ENCODE measurements at regions of chr4 and their contacts with region 1.

Region 1: GRCh38 chr4:11720292-11720691 is 291.6 kb upstream of the HS3ST1 start:
- DNase-seq: peak in 5 of 7 donors; percentile 29 to 55 (median 33)
- H3K4me3 ChIP-seq: no peak overlapping the region
- H3K27ac ChIP-seq: no peak overlapping the region
- H3K4me1 ChIP-seq: no peaks in the 10 kb centered on the region
- H3K27me3 ChIP-seq: no peaks in the 10 kb centered on the region
- CTCF ChIP-seq: peak; percentile 67 to 86 (median 82)
- POLR2A ChIP-seq: no peak

Region 2: GRCh38 chr4:10565166-10565780 is 1155.0 kb before region 1 on chr4:
- intact Hi-C with region 1: loop called in 1 of 2 experiments (anchors 10 kb)
- DNase-seq: peak in 6 of 7 donors; percentile 17 to 49 (median 36)
- H3K4me3 ChIP-seq: no peak overlapping the region
- H3K27ac ChIP-seq: peak overlapping the region in 1 of 5 donors; percentile 26
- H3K4me1 ChIP-seq: no peaks in the 10 kb centered on the region
- H3K27me3 ChIP-seq: no peaks in the 10 kb centered on the region
- CTCF ChIP-seq: no peak
- POLR2A ChIP-seq: no peak

Region 3: GRCh38 chr4:11393551-11393950 is 326.7 kb before region 1 on chr4:
- intact Hi-C with region 1: no loop called
- DNase-seq: no peak
- H3K4me3 ChIP-seq: no peak overlapping the region
- H3K27ac ChIP-seq: no peak overlapping the region
- H3K4me1 ChIP-seq: peaks cover 11 to 15% of the 10 kb centered on the region in 2 donors
- H3K27me3 ChIP-seq: no peaks in the 10 kb centered on the region
- CTCF ChIP-seq: no peak
- POLR2A ChIP-seq: no peak

Region 4: DNA sequence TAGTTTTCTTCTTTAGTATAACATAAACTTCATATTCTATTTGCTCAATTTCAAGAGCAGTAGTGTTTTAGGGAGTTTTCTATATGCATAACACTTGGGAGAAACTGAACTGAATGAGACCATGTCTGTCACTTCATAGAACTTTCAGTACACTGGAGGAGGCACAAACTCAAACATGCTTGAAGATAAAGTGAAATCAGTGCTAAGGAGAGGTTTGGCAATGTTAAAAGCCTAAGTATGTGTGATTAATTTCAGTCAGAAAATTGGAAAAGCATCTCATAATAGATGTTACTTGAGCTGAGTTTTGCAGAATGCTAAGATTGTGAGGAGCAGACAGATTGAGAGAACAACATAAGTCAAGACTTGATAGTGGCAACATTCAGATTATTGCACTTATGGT is 119.6 kb after region 1 on chr4:
- intact Hi-C with region 1: no loop called
- DNase-seq: no peak
- H3K4me3 ChIP-seq: no peak overlapping the region
- H3K27ac ChIP-seq: no peak overlapping the region
- H3K4me1 ChIP-seq: no peaks in the 10 kb centered on the region
- H3K27me3 ChIP-seq: no peaks in the 10 kb centered on the region
- CTCF ChIP-seq: no peak
- POLR2A ChIP-seq: no peak

Region 5: GRCh38 chr4:12041828-12042227 is 321.5 kb after region 1 on chr4:
- intact Hi-C with region 1: no loop called
- DNase-seq: no peak
- H3K4me3 ChIP-seq: no peak overlapping the region
- H3K27ac ChIP-seq: no peak overlapping the region
- H3K4me1 ChIP-seq: no peaks in the 10 kb centered on the region
- H3K27me3 ChIP-seq: no peaks in the 10 kb centered on the region
- CTCF ChIP-seq: peak in 3 of 6 experiments; percentile 24 to 37 (median 34)
- POLR2A ChIP-seq: no peak

Measured in adrenal gland (tissue), 19 donors.